ENCODE measurements at regions of chr17 and their contacts with region 1.

Region 1: DNA sequence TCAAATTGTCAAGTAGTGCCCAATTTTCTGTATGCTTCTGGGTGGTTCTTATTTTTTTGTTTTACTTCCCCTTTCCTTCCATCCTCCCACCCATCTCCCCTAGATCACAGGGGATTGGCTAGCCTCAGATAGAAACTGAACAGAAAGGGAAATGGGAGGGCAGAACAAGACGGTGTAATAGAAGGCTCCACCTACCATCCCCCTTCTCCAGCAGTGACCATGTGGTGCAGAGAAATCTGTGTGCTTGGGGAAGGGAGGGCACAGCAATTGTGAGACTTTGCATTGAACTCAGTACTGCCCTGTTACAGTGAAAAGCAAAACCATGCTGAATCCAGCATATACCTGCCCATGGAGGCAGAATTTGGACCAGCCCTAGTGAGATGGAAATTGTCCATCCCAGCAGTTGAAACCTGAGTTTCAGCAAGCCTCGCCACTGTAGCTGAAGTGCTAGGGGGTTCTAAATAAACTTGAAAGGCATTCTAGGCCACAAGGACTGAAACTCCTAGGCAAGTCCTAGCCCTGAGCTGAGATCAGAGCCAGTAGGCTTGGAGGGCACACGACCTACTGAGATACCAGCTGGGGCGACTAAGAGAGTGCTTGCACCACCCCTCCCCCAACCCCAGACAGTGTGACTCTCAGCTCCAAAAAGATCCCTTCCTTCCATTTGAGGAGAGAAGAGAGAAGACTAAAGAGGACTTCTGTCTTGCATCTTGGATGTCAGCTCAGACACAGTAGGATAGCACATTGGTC is 5.2 kb downstream of the SLFN11 start:
- DNase-seq: no peak
- ATAC-seq: peak; percentile 79

Region 2: GRCh38 chr17:35312790-35313711 is 55.2 kb before region 1 on chr17:
- intact Hi-C with region 1: loop called (anchors 10 kb)
- DNase-seq: peak; percentile 60
- ATAC-seq: peak; percentile 94

Region 3: GRCh38 chr17:35476283-35476820 is 108.1 kb after region 1 on chr17:
- intact Hi-C with region 1: no loop called
- DNase-seq: no peak
- ATAC-seq: no peak

Measured in Right ventricle myocardium superior (tissue), 1 donor.